CD14-positive monocyte (primary cell): ENCODE measurements at regions of chr16 and their contacts with region 1.

Region 1: DNA sequence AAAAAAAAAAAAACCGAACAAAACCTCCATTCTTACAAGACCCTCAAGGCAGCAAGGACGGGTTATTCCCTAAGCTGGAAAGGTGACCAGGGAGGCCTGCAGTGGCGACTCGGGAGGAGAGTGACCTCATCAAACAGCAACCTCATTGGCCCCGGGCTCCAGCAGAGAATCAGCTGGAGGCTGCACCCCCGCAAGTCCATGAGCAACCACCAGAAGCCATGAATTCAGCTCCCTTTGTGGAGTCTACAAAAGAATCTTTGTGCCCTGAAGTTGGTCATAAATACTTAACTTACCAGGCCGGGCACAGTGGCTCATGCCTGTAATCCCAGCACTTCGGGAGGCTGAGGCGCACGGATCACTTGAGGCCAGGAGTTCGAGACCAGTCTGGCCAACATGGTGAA is 80.9 kb upstream of the CREBBP start:
- DNase-seq: peak in 1 of 3 donors; percentile 32
- H3K4me3 ChIP-seq: peak overlapping the region in 1 of 3 experiments; percentile 75
- H3K4me3 Mint-ChIP-seq: peak overlapping the region; percentile 85 to 90
- H3K27ac ChIP-seq: no peak overlapping the region
- H3K27ac Mint-ChIP-seq: peak overlapping the region in 4 of 7 donors; percentile 74 to 85 (median 78)
- H3K4me1 ChIP-seq: peaks cover 24 to 34% of the 10 kb centered on the region in 2 donors
- H3K4me1 Mint-ChIP-seq: peaks cover 32% of the 10 kb centered on the region
- H3K27me3 ChIP-seq: peaks cover 0 to 19% of the 10 kb centered on the region in 2 donors
- H3K27me3 Mint-ChIP-seq: peaks cover 20 to 43% (median 30%) of the 10 kb centered on the region in 3 donors
- CTCF ChIP-seq: no peak

Region 2: GRCh38 chr16:3654249-3654991 is 307.0 kb before region 1 on chr16 and contains the start of gene DNASE1:
- intact Hi-C with region 1: no loop called
- DNase-seq: peak; percentile 41 to 55 (median 43)
- H3K4me3 ChIP-seq: no peak within 1 kb of the TSS
- H3K4me3 Mint-ChIP-seq: no peak within 1 kb of the TSS
- H3K27ac ChIP-seq: no peak within 1 kb of the TSS
- H3K27ac Mint-ChIP-seq: peak within 1 kb of the TSS in 3 of 7 donors; percentile 16 to 42 (median 33)
- H3K4me1 ChIP-seq: no peaks in the 10 kb centered on the region
- H3K4me1 Mint-ChIP-seq: peaks cover 1% of the 10 kb centered on the region
- H3K27me3 ChIP-seq: no peaks in the 10 kb centered on the region
- H3K27me3 Mint-ChIP-seq: no peaks in the 10 kb centered on the region
- CTCF ChIP-seq: peak; percentile 89
- polyA plus RNA-seq, gene DNASE1: 1.5 to 21.1 TPM in 2 of 3 donors, not detected in the other

Region 3: DNA sequence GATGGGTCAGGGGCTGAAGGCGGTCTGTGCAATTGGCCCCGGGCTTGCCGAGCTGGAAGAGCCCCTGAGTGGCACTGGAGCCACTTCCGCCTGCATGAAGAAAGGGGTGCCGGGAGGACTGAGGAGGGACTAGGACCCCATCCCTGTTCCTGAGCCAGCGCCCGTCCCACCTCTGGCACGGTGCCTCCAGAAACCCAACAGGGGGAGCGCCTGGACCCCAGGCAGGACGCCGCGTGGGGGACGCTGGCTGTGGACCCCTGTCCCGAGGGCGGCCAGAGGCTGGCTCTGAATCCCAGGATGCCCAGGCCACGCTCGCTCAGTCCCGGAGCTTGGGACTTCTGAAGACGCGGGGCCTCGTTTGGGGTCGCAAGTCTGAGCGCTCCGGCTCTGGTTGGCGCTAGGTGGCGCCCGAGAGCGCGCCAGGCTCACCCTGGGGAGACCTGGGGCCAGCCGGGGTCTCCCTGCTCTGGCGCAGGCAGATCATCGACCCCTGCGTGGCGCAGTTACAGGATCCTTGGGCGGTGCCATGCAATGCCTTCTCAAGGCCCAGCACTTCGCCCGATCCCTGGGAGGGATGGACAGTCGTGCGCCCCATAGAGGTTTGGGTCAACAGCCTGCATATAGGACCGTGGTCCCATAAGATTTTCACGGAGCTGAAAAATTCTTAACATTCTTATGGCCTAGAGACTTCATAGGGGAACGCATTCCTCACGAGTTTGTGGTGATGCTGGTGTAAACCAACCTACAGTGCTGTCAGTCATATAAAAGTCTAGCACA is 22.4 kb before region 1 on chr16:
- intact Hi-C with region 1: no loop called
- DNase-seq: peak; percentile 33 to 61 (median 51)
- H3K4me3 ChIP-seq: peak overlapping the region in 2 of 3 experiments; percentile 35 to 53
- H3K4me3 Mint-ChIP-seq: peak overlapping the region; percentile 63 to 74
- H3K27ac ChIP-seq: no peak overlapping the region
- H3K27ac Mint-ChIP-seq: no peak overlapping the region
- H3K4me1 ChIP-seq: peaks cover 8 to 11% of the 10 kb centered on the region in 2 donors
- H3K4me1 Mint-ChIP-seq: peaks cover 6% of the 10 kb centered on the region
- H3K27me3 ChIP-seq: peaks cover 0 to 7% of the 10 kb centered on the region in 2 donors
- H3K27me3 Mint-ChIP-seq: peaks cover 11 to 22% (median 12%) of the 10 kb centered on the region in 3 donors
- CTCF ChIP-seq: peak; percentile 100

Region 4: DNA sequence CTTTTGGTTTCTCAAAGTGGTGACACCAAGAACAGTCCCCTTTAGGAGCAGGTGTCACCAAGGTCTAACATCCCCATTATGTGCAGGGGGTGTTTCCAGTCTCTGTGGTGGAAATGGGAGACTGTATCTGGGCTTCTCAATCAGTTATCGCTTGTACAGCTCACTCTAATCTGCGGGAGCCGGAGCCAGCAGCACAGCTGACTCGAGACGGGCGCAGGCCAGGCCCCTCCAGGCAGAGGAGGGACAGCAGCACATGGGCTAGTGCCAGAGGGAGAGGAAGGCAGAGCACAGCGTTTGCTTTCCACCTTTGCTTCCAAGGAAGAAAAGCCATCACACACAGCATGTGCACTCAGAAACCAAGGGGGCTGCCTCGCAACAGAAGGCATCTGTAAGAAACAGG is 10.3 kb after region 1 on chr16:
- intact Hi-C with region 1: no loop called
- DNase-seq: no peak
- H3K4me3 ChIP-seq: no peak overlapping the region
- H3K4me3 Mint-ChIP-seq: no peak overlapping the region
- H3K27ac ChIP-seq: no peak overlapping the region
- H3K27ac Mint-ChIP-seq: no peak overlapping the region
- H3K4me1 ChIP-seq: peaks cover 4 to 8% of the 10 kb centered on the region in 2 donors
- H3K4me1 Mint-ChIP-seq: peaks cover 9% of the 10 kb centered on the region
- H3K27me3 ChIP-seq: no peaks in the 10 kb centered on the region
- H3K27me3 Mint-ChIP-seq: peaks cover 0 to 4% (median 4%) of the 10 kb centered on the region in 3 donors
- CTCF ChIP-seq: no peak

Region 5: DNA sequence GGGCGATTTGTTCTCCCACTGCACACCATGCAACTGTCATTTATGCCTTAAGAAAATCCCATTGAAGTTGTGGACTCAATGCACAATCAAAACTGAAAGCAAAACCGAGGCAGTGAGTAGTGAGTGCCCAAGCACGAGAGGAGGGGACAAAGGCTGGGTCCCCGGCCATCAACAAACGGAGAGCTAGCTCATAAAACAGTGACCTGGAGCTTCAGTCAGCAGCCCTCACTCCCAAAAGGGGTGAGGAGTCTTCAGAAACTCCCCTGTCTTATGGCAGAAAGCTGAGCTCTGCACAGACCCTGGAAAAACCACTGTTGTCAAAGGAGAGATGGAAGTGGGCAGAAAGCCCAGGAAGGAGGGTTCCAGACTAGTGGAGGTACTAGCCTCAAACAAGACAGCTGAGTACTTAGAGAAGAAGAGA is 57.9 kb after region 1 on chr16:
- intact Hi-C with region 1: loop called in 1 of 2 experiments (anchors 5 kb)
- DNase-seq: peak in 2 of 3 donors; percentile 43 to 50
- H3K4me3 ChIP-seq: peak overlapping the region; percentile 10 to 67 (median 51)
- H3K4me3 Mint-ChIP-seq: peak overlapping the region; percentile 76 to 81
- H3K27ac ChIP-seq: peak overlapping the region; percentile 22 to 73
- H3K27ac Mint-ChIP-seq: peak overlapping the region; percentile 64 to 93 (median 88)
- H3K4me1 ChIP-seq: peaks cover 42 to 44% of the 10 kb centered on the region in 2 donors
- H3K4me1 Mint-ChIP-seq: peaks cover 42% of the 10 kb centered on the region
- H3K27me3 ChIP-seq: no peaks in the 10 kb centered on the region
- H3K27me3 Mint-ChIP-seq: peaks cover 0 to 2% (median 2%) of the 10 kb centered on the region in 3 donors
- CTCF ChIP-seq: no peak